ENCODE measurements at regions of chr7 and their contacts with region 1.

Region 1: GRCh38 chr7:12686894-12687717 is at the start of gene ARL4A:
- DNase-seq: peak; percentile 99
- H3K4me3 ChIP-seq: peak within 1 kb of the TSS; percentile 81 to 96 (median 93)
- H3K27ac ChIP-seq: peak within 1 kb of the TSS; percentile 88
- H3K4me1 ChIP-seq: peaks cover 16% of the 10 kb centered on the region
- H3K27me3 ChIP-seq: no peaks in the 10 kb centered on the region
- CTCF ChIP-seq: peak; percentile 26 to 43
- POLR2A ChIP-seq: peak; percentile 99
- total RNA-seq, gene ARL4A: 30.7 and 34.1 TPM in 2 replicates

Region 2: DNA sequence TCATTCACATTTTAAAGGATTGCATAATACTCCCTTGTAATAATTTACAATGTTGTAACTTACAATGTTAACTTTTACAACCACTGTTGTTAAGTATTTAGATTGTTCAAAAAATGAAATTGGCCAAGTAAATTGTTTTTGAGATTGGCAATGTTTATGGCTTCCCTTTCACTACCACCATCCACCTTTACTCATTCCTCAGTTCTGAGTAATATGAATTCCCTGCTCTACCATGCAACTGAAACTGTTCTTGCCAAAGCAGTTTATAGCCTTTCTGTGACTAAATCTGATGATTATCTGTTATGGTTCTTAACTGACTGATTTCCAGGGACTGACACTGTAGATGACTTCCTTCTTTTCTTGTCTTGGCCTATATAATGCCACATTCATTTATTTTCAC is 556.5 kb before region 1 on chr7:
- CTCF ChIA-PET with region 1: no interaction called
- POLR2A ChIA-PET with region 1: no interaction called
- dilution Hi-C with region 1: no loop called
- intact Hi-C with region 1: no loop called
- DNase-seq: no peak
- H3K4me3 ChIP-seq: no peak overlapping the region
- H3K27ac ChIP-seq: no peak overlapping the region
- H3K4me1 ChIP-seq: no peaks in the 10 kb centered on the region
- H3K27me3 ChIP-seq: no peaks in the 10 kb centered on the region
- CTCF ChIP-seq: no peak
- POLR2A ChIP-seq: no peak

Region 3: DNA sequence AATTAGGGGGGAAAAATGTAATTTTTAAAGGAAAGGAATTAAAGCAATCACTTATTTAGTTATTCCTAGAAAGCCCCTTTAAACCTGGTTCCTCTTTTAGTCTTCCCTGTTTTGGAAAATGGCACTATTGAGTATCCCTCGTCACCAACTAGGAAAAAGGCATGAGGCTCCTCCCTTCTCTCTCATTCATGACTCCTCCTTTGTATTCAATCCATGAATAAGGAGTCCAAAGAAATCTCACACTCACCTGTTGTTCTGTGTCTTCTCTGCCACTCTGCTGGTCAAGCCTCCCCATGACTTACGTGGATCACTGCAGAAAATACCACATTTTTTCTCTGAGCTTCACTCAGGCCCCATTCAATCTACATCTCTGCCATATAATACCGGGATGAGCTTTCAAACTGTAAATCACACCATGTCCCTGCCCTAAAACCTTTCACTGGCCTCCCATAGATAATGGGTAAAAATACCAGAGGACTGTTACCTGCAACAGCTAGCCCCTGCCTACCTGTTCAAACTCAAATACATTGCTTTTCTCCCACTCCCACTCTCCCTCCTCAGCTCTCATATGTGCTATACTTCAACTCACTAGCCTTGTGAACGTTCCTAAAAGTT is 277.9 kb before region 1 on chr7:
- CTCF ChIA-PET with region 1: no interaction called
- POLR2A ChIA-PET with region 1: no interaction called
- dilution Hi-C with region 1: no loop called
- intact Hi-C with region 1: no loop called
- DNase-seq: no peak
- H3K4me3 ChIP-seq: no peak overlapping the region
- H3K27ac ChIP-seq: no peak overlapping the region
- H3K4me1 ChIP-seq: no peaks in the 10 kb centered on the region
- H3K27me3 ChIP-seq: peaks cover 2 to 5% of the 10 kb centered on the region in 2 experiments
- CTCF ChIP-seq: no peak
- POLR2A ChIP-seq: no peak

Region 4: DNA sequence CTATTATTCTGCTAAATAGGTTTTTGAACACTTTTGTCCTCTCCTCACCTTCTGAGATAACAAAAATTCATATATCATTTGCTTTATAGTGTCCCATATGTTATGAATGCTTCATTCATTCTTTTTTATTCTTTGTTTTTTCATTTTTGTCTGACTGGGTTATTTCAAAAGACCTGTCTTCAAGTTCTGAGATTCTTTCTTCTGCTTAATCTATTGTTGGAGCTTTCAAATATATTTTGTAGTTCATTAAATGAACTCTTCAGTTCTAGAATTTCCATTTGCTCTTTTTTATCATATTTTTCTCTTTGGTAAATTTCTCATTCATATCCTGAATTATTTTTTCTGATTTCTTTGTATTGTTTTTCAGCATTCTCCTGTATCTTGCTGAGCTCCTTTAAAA is 169.7 kb before region 1 on chr7:
- CTCF ChIA-PET with region 1: no interaction called
- POLR2A ChIA-PET with region 1: no interaction called
- dilution Hi-C with region 1: no loop called
- intact Hi-C with region 1: no loop called
- DNase-seq: no peak
- H3K4me3 ChIP-seq: no peak overlapping the region
- H3K27ac ChIP-seq: no peak overlapping the region
- H3K4me1 ChIP-seq: no peaks in the 10 kb centered on the region
- H3K27me3 ChIP-seq: peaks cover 2 to 19% of the 10 kb centered on the region in 2 experiments
- CTCF ChIP-seq: no peak
- POLR2A ChIP-seq: no peak

Region 5: GRCh38 chr7:12674849-12675248 is 12.3 kb before region 1 on chr7:
- CTCF ChIA-PET with region 1: interaction called, 11 read pairs
- POLR2A ChIA-PET with region 1: no interaction called
- dilution Hi-C with region 1: no loop called
- intact Hi-C with region 1: no loop called
- DNase-seq: peak; percentile 50
- H3K4me3 ChIP-seq: no peak overlapping the region
- H3K27ac ChIP-seq: no peak overlapping the region
- H3K4me1 ChIP-seq: no peaks in the 10 kb centered on the region
- H3K27me3 ChIP-seq: no peaks in the 10 kb centered on the region
- CTCF ChIP-seq: peak; percentile 39 to 43
- POLR2A ChIP-seq: no peak

Region 6: DNA sequence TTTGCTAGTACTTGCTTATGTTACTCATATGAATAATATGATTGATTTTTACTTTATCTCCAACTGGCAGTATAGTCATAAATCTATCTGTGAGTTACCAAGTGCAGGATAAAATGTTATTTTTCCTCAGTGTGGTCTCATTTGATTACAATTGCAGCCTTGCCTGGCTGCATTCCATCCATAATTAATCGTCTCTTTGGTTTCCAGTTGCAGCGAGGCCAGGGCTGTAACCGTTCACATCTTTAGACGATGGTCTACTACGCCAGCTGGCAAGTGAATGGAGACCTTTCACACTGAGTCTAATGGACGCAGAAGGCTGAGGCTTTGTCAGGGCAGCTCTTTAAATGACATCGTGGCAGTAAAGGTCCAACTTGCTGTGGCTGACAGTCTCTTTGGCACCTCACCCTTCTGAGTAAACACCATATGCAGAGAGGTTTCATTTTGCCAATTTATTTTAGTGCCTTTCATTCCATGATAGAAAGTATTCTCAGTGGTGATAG is 84.3 kb after region 1 on chr7:
- CTCF ChIA-PET with region 1: interaction called, 35 read pairs
- POLR2A ChIA-PET with region 1: interaction called, 15 read pairs
- dilution Hi-C with region 1: no loop called
- intact Hi-C with region 1: loop called (anchors 1 kb)
- DNase-seq: peak; percentile 99
- H3K4me3 ChIP-seq: peak overlapping the region in 1 of 3 experiments; percentile 38
- H3K27ac ChIP-seq: peak overlapping the region; percentile 95
- H3K4me1 ChIP-seq: peaks cover 33% of the 10 kb centered on the region
- H3K27me3 ChIP-seq: no peaks in the 10 kb centered on the region
- CTCF ChIP-seq: no peak
- POLR2A ChIP-seq: peak; percentile 81

Region 7: GRCh38 chr7:12907774-12908173 is 220.7 kb after region 1 on chr7:
- CTCF ChIA-PET with region 1: interaction called, 4 read pairs
- POLR2A ChIA-PET with region 1: interaction called, 3 read pairs
- dilution Hi-C with region 1: no loop called
- intact Hi-C with region 1: loop called (anchors 5 kb)
- DNase-seq: no peak
- H3K4me3 ChIP-seq: no peak overlapping the region
- H3K27ac ChIP-seq: no peak overlapping the region
- H3K4me1 ChIP-seq: no peaks in the 10 kb centered on the region
- H3K27me3 ChIP-seq: no peaks in the 10 kb centered on the region
- CTCF ChIP-seq: no peak
- POLR2A ChIP-seq: no peak

Region 8: DNA sequence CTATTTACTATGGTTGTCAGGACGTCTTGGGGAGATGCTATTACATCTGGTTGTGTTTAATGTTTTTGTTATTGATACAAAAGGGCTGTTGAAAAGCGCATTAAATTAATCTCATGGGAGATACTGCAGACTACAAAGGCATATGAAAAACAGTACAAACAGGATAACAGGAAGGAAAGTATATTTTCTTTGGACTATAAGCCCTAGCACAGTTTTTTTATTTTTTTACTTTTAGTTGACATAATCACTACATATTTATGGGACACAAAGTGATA is 341.7 kb after region 1 on chr7:
- CTCF ChIA-PET with region 1: interaction called, 4 read pairs
- POLR2A ChIA-PET with region 1: interaction called, 3 read pairs
- dilution Hi-C with region 1: no loop called
- intact Hi-C with region 1: loop called (anchors 1 kb)
- DNase-seq: peak; percentile 80
- H3K4me3 ChIP-seq: no peak overlapping the region
- H3K27ac ChIP-seq: peak overlapping the region; percentile 47
- H3K4me1 ChIP-seq: peaks cover 18% of the 10 kb centered on the region
- H3K27me3 ChIP-seq: no peaks in the 10 kb centered on the region
- CTCF ChIP-seq: no peak
- POLR2A ChIP-seq: no peak

Region 9: DNA sequence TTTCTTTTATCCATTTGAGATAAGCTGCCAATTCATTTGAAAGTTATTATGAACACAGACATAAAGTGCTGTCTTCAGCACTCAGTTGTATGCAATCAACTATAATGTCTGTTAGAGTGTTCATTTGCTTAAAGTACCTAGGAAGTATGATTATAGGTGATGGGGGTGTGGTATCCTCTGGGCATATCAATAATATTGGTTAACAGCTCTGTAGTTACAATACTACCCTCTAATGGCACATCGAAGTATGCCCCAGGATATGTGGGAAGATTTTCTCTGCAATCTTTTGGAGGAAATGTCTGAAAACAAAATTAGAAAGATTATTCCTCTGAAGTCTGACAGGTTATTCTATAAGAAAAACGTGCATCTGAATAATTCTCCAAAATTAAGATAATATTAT is 430.0 kb after region 1 on chr7:
- CTCF ChIA-PET with region 1: interaction called, 219 read pairs
- POLR2A ChIA-PET with region 1: interaction called, 4 read pairs
- dilution Hi-C with region 1: no loop called
- intact Hi-C with region 1: loop called (anchors 1 kb)
- DNase-seq: peak; percentile 62
- H3K4me3 ChIP-seq: no peak overlapping the region
- H3K27ac ChIP-seq: no peak overlapping the region
- H3K4me1 ChIP-seq: no peaks in the 10 kb centered on the region
- H3K27me3 ChIP-seq: no peaks in the 10 kb centered on the region
- CTCF ChIP-seq: peak; percentile 9 to 36
- POLR2A ChIP-seq: no peak

Region 10: GRCh38 chr7:13920053-13920697 is 1233.1 kb after region 1 on chr7:
- CTCF ChIA-PET with region 1: no interaction called
- POLR2A ChIA-PET with region 1: no interaction called
- dilution Hi-C with region 1: no loop called
- intact Hi-C with region 1: loop called (anchors 2 kb)
- DNase-seq: peak; percentile 99
- H3K4me3 ChIP-seq: peak overlapping the region in 2 of 3 experiments; percentile 19 to 67
- H3K27ac ChIP-seq: peak overlapping the region; percentile 99
- H3K4me1 ChIP-seq: peaks cover 21% of the 10 kb centered on the region
- H3K27me3 ChIP-seq: no peaks in the 10 kb centered on the region
- CTCF ChIP-seq: no peak
- POLR2A ChIP-seq: no peak

Measured in endothelial cell of umbilical vein (primary cell).